Activated CD4-positive, alpha-beta T cell treated with anti-CD3 and anti-CD28 coated beads for 36 hours (primary cell): ENCODE measurements at regions of chr6 and their contacts with region 1.

Region 1: DNA sequence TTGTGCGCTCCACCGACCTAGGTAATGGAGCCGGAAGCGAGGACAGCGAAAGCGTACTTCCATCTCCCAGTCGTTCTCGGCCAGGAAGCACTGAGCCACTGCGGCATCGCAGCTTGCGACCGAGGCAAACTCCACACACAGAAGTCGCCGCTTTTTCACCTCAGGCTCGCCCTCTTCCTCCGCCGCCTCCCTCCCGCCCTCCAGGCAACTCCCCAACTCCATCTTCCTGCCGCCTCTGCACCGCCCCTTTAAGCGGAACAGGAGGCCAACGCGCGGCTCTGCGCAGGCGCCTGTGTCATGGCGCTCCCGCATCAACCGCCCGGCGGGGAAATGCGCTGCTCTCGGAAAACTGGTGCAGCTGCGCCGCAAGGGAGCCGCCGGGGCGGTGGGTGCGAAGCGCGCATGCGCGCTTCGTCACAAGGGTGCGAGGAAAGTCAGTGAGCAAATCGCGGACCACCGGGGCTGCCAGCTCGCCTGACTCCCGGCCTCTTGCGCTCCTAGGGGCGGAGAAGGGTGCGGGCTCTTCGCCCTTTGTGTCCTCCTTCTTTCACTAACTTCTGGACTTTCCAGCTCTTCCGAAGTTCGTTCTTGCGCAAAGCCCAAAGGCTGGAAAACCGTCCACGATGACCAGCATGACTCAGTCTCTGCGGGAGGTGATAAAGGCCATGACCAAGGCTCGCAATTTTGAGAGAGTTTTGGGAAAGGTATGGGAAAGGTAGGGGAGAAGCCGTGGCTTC is at the starts of genes ACOT13 and TDP2:
- DNase-seq: peak; percentile 97
- ATAC-seq: peak; percentile 97
- H3K4me3 Mint-ChIP-seq: peak within 1 kb of the TSS; percentile 90
- H3K27ac Mint-ChIP-seq: peak within 1 kb of the TSS; percentile 99
- H3K4me1 Mint-ChIP-seq: peaks cover 42% of the 10 kb centered on the region
- H3K27me3 Mint-ChIP-seq: no peaks in the 10 kb centered on the region
- total RNA-seq, gene ACOT13: 37.3 to 47.9 TPM
- total RNA-seq, gene TDP2: 41.4 to 45.4 TPM

Region 2: DNA sequence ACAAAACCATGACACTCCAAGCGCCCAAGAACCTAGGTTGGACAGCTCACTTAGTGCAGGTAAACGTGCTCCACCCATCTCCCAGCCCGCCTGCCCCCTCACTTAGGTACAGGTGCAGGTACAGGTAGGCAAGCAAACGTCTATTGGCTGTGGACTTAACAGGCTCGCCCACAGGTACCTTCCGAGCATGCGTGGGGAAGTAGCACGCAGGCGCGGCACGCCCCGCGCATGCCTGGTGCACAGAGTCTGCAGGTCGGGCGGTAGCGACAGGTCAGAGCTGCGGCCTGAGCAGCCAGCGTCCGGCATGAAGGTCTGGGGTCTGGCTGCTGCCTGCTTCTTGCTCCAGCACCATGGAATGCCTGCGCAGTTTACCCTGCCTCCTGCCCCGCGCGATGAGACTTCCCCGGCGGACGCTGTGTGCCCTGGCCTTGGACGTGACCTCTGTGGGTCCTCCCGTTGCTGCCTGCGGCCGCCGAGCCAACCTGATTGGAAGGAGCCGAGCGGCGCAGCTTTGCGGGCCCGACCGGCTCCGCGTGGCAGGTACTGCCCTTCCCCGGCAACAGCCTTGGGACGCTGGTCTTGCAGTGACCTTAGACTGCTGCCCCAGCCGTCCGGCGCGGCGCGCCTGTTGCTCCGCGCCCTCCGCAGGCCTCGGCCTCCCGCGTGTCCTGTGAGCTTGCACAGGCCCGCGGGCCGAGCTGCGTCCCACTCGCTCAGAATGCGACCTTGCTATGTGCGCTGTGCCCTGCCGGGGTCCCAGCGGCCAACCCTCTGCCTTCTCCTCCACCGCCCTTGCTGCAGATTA is 263.9 kb before region 1 on chr6 and contains the start of gene MRS2:
- CTCF ChIA-PET with region 1: no interaction called
- POLR2A ChIA-PET with region 1: no interaction called
- intact Hi-C with region 1: loop called in 1 of 2 experiments (anchors 2 kb)
- DNase-seq: peak; percentile 84
- ATAC-seq: peak; percentile 97
- H3K4me3 Mint-ChIP-seq: peak within 1 kb of the TSS; percentile 93
- H3K27ac Mint-ChIP-seq: peak within 1 kb of the TSS; percentile 86
- H3K4me1 Mint-ChIP-seq: peaks cover 24% of the 10 kb centered on the region
- H3K27me3 Mint-ChIP-seq: peaks cover 13% of the 10 kb centered on the region
- total RNA-seq, gene MRS2: 21.0 to 25.5 TPM

Region 3: DNA sequence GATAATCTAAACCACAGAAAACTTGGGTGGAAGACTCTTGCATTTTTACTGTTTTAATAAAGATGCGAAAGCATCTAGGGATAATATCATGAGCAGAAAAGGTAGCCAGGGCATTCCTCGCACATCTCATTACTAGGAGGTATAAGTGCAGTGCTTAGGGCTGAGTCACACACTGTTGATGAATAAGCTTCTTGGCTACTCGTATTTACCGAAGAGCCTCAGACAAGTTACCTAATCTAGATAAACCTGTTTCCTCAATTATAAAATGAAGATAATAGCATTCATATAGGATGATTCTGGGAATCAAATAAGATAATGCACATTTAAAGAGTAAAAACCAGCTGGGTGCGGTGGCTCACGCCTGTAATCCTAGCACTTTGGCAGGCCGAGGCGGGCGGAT is 20.0 kb before region 1 on chr6:
- CTCF ChIA-PET with region 1: interaction called, 6 read pairs
- POLR2A ChIA-PET with region 1: interaction called, 4 read pairs
- intact Hi-C with region 1: loop called (anchors 1 kb)
- DNase-seq: no peak
- ATAC-seq: peak; percentile 24
- H3K4me3 Mint-ChIP-seq: peak overlapping the region; percentile 78
- H3K27ac Mint-ChIP-seq: peak overlapping the region; percentile 19
- H3K4me1 Mint-ChIP-seq: peaks cover 14% of the 10 kb centered on the region
- H3K27me3 Mint-ChIP-seq: peaks cover 11% of the 10 kb centered on the region

Region 4: GRCh38 chr6:24720604-24721460 is 54.0 kb after region 1 on chr6:
- CTCF ChIA-PET with region 1: interaction called, 3 read pairs
- POLR2A ChIA-PET with region 1: interaction called, 5 read pairs
- intact Hi-C with region 1: loop called (anchors 1 kb)
- DNase-seq: peak; percentile 100
- ATAC-seq: peak; percentile 88
- H3K4me3 Mint-ChIP-seq: peak overlapping the region; percentile 99
- H3K27ac Mint-ChIP-seq: peak overlapping the region; percentile 98
- H3K4me1 Mint-ChIP-seq: peaks cover 32% of the 10 kb centered on the region
- H3K27me3 Mint-ChIP-seq: no peaks in the 10 kb centered on the region

Region 5: DNA sequence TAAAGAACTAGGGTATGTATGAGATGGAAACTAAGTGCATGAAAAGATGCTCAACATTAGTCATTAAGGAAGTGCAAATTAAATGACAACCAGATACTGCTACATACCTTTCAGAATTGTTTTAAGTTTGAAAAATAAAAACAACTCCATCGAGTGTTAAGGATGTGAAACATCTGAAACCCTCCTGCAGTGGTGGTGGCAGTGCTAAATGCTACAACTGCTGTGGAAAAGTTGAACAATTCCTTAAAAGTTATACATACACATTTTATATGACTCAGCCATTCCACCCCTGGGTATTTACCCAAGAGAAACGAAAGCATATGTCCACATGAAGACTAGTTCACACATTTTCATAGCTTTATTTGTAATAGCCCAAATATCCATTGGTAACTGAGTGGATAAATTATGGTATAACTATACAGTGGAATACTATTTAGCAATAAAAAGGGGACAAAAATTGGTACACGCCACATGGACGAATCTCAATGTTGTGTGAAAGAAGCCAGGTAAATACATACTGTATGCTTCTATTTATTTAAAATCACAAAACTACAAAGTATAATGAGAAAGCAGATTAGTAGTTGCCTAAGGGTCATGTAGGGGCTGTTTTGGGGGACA is 121.3 kb after region 1 on chr6:
- CTCF ChIA-PET with region 1: interaction called, 3 read pairs
- POLR2A ChIA-PET with region 1: interaction called, 14 read pairs
- intact Hi-C with region 1: no loop called
- DNase-seq: peak; percentile 37
- ATAC-seq: peak; percentile 86
- H3K4me3 Mint-ChIP-seq: no peak overlapping the region
- H3K27ac Mint-ChIP-seq: peak overlapping the region; percentile 8
- H3K4me1 Mint-ChIP-seq: peaks cover 25% of the 10 kb centered on the region
- H3K27me3 Mint-ChIP-seq: no peaks in the 10 kb centered on the region